Mucosa of descending colon (tissue), 3 donors: ENCODE measurements at regions of chr10 and their contacts with region 1.

Region 1: GRCh38 chr10:45594276-45595106 is 78.1 kb downstream of the ZFAND4 start:
- DNase-seq: peak; percentile 94 to 96 (median 96)
- ATAC-seq: peak; percentile 94
- H3K4me3 ChIP-seq: peak overlapping the region; percentile 59
- H3K4me1 ChIP-seq: peaks cover 12% of the 10 kb centered on the region
- CTCF ChIP-seq: no peak

Region 2: GRCh38 chr10:45386675-45387074 is 207.8 kb before region 1 on chr10:
- intact Hi-C with region 1: no loop called
- DNase-seq: no peak
- ATAC-seq: no peak
- H3K4me3 ChIP-seq: no peak overlapping the region
- H3K4me1 ChIP-seq: no peaks in the 10 kb centered on the region
- CTCF ChIP-seq: no peak

Region 3: DNA sequence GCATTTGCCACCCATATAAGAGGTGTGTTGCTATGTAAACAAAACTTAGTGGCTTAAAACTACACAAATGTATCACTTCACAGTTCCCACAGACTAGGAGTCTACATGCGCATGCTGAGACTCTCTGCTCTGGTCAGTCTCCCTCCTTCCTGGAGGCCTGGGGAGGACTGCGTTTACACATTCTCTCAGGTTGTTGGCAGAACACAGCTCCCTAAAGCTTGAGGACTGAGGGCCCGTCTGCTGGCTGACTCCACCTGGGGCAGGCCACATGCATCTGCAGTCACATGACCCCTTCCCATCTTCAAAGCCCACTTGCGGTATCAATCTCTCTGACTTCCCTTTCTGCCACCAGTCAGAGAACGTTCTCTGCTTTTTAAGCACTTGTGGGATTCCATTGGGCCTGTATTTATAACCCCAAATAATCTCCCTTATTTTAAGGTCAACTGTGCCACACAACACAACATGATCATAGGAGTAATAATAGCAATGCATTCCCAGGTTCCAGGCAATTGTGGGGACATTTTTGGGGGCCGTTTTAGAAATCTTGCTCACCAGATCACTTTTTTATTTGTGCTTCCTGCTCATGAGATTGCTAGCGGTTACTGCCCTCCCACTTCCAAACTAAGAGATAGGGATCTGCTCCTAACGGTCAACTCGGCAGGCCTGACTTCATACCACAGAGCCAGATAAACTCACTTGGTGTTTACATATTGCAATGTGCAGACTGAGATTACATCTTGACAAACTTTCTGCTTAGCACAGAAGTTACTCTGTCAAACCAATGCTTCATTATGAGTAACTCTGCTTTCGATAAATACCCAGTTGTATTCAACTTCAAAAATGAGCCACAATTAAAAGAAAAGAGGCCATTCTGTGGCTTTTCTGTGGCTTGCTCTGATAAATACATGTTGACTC is 124.1 kb before region 1 on chr10:
- intact Hi-C with region 1: loop called in 1 of 2 experiments (anchors 10 kb)
- DNase-seq: no peak
- ATAC-seq: peak; percentile 52
- H3K4me3 ChIP-seq: no peak overlapping the region
- H3K4me1 ChIP-seq: peaks cover 15% of the 10 kb centered on the region
- CTCF ChIP-seq: no peak